ENCODE measurements at regions of chr1 and their contacts with region 1.

Region 1: GRCh38 chr1:54406339-54407153 is at the start of gene SSBP3:
- DNase-seq: peak; percentile 91
- H3K4me3 Mint-ChIP-seq: peak within 1 kb of the TSS; percentile 88
- H3K27ac Mint-ChIP-seq: peak within 1 kb of the TSS; percentile 83
- H3K4me1 Mint-ChIP-seq: peaks cover 72% of the 10 kb centered on the region
- H3K27me3 Mint-ChIP-seq: no peaks in the 10 kb centered on the region
- total RNA-seq, gene SSBP3: 98.0 and 110 TPM in 2 replicates

Region 2: GRCh38 chr1:53889304-53890298 is 516.9 kb before region 1 on chr1 and contains the start of gene YIPF1:
- intact Hi-C with region 1: loop called (anchors 2 kb)
- DNase-seq: peak; percentile 89
- H3K4me3 Mint-ChIP-seq: peak within 1 kb of the TSS; percentile 98
- H3K27ac Mint-ChIP-seq: peak within 1 kb of the TSS; percentile 96
- H3K4me1 Mint-ChIP-seq: peaks cover 26% of the 10 kb centered on the region
- H3K27me3 Mint-ChIP-seq: no peaks in the 10 kb centered on the region
- total RNA-seq, gene YIPF1: 14.7 and 15.2 TPM in 2 replicates

Region 3: DNA sequence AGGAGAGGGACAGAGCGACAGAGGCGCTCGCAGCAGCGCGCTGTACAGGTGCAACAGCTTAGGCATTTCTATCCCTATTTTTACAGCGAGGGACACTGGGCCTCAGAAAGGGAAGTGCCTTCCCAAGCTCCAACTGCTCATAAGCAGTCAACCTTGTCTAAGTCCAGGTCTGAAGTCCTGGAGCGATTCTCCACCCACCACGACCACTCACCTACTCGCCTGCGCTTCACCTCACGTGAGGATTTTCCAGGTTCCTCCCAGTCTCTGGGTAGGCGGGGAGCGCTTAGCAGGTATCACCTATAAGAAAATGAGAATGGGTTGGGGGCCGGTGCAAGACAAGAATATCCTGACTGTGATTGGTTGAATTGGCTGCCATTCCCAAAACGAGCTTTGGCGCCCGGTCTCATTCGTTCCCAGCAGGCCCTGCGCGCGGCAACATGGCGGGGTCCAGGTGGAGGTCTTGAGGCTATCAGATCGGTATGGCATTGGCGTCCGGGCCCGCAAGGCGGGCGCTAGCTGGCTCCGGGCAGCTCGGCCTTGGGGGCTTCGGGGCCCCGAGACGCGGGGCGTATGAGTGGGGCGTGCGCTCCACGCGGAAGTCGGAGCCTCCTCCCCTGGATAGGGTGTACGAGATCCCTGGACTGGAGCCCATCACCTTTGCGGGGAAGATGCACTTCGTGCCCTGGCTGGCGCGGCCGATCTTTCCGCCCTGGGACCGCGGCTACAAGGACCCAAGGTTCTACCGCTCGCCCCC is 206.6 kb before region 1 on chr1 and contains the starts of genes CYB5RL and MRPL37:
- intact Hi-C with region 1: loop called (anchors 1 kb)
- DNase-seq: peak; percentile 89
- H3K4me3 Mint-ChIP-seq: peak within 1 kb of the TSS; percentile 90
- H3K27ac Mint-ChIP-seq: peak within 1 kb of the TSS; percentile 60
- H3K4me1 Mint-ChIP-seq: peaks cover 40% of the 10 kb centered on the region
- H3K27me3 Mint-ChIP-seq: no peaks in the 10 kb centered on the region
- total RNA-seq, gene CYB5RL: 8.3 and 11.3 TPM in 2 replicates
- total RNA-seq, gene MRPL37: 145 and 150 TPM in 2 replicates

Region 4: DNA sequence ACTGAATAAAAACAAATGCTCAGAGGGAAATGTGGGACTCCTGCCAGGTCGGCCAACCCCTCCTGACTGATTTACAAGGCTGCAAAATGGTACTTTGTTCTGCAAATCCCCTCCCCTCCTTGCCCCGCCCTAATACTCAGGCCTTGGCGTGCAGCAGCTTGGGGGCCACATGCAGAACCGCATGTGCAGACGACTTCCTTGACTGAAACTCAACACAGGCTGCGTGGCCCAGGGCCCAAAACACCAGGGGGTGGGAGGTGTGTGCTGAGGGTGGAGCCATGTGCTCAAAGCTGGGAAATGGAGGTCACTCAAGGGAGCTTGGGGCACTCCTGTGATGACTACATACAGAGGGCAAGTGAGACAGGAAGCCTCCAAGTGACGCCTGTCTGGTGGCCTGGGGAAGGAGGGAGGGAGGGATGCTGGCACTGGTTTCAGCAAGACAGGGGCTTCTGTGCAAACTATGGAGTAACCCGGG is 119.3 kb before region 1 on chr1:
- intact Hi-C with region 1: loop called (anchors 1 kb)
- DNase-seq: peak; percentile 79
- H3K4me3 Mint-ChIP-seq: peak overlapping the region; percentile 81
- H3K27ac Mint-ChIP-seq: peak overlapping the region; percentile 98
- H3K4me1 Mint-ChIP-seq: peaks cover 89% of the 10 kb centered on the region
- H3K27me3 Mint-ChIP-seq: no peaks in the 10 kb centered on the region

Region 5: GRCh38 chr1:54715493-54716298 is 309.1 kb after region 1 on chr1 and contains the start of gene TTC4:
- intact Hi-C with region 1: loop called (anchors 2 kb)
- DNase-seq: peak; percentile 84
- H3K4me3 Mint-ChIP-seq: peak within 1 kb of the TSS; percentile 94
- H3K27ac Mint-ChIP-seq: peak within 1 kb of the TSS; percentile 77
- H3K4me1 Mint-ChIP-seq: peaks cover 31% of the 10 kb centered on the region
- H3K27me3 Mint-ChIP-seq: peaks cover 6% of the 10 kb centered on the region
- total RNA-seq, gene TTC4: 43.7 TPM in 2 replicates

Region 6: DNA sequence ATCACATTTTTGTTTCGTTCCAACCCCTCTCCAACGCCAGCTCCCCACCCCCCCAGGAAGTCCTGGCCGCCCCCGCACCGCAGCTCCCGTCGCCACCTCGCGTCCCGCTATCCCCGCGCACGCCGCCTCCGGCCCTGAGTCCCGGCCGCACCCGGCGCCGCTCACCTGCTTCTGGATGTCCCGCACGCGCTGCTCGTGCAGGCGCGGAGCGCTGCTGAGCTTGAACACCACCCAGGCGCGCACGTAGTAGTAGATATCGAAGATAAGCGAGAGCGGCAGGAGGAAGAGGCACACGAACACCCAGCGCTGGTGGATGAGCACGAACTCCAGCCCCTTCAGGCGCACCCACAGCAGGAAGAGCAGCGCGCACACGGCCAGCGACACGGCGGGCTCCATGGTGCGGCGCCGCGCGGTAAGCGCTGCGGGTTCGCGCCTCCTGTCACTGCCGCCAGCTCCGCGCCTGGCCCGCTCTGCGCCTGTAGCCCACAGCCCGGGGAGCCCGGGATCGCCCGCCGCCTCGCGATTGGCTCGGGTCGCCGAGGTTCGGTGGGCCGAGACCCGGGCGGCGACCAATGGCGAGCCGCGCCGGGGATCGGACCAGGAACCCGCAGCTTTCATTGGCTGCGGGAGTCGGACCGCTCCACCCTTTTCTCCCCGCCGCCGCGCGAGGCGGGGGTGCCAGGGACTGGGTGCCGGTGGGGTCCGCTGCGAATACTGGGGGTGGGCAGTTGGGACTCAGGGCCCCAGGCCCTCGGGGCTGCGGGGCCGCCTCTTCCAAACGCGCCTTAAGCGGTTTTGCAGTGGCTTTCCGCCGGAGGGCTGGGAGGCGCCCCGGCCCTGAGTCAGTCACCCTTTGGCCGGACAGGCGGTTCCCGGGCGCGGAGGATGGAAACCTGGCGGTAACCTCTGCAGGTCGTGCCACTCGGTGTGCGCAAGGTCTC is 480.4 kb after region 1 on chr1 and contains the start of gene DHCR24:
- intact Hi-C with region 1: loop called (anchors 10 kb)
- DNase-seq: peak; percentile 85
- H3K4me3 Mint-ChIP-seq: peak within 1 kb of the TSS; percentile 96
- H3K27ac Mint-ChIP-seq: peak within 1 kb of the TSS; percentile 87
- H3K4me1 Mint-ChIP-seq: peaks cover 56% of the 10 kb centered on the region
- H3K27me3 Mint-ChIP-seq: peaks cover 10% of the 10 kb centered on the region
- total RNA-seq, gene DHCR24: 206 and 211 TPM in 2 replicates